ENCODE measurements at regions of chr20 and their contacts with region 1.

Region 1: DNA sequence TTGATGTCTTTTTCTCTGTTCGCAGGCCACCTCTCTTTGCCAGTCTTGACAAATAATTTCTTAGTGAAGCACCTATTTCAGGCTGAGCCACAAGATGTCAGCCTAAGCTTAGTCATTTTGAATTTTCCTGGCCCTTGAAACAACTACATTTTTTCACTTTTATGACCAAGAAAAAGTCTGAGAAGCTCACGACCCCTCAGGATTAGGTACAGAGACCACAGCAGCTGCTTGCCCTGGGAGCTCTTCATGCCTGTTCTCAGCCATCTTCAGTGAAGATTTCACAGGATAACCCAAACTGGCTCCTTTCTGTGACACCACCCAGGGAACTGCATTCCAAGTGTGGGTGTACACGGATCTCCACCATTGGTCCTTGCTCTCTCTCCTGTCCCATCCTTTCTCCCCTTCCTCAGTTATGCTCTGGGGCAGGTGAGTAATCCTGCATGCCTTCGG is 38.4 kb upstream of the SPTLC3 start:
- DNase-seq: peak in 2 of 9 experiments; percentile 14 to 29
- ATAC-seq: no peak
- H3K4me3 ChIP-seq: no peak overlapping the region
- H3K4me3 Mint-ChIP-seq: no peak overlapping the region
- H3K27ac ChIP-seq: no peak overlapping the region
- H3K27ac Mint-ChIP-seq: no peak overlapping the region
- H3K4me1 ChIP-seq: no peaks in the 10 kb centered on the region
- H3K4me1 Mint-ChIP-seq: peaks cover 4% of the 10 kb centered on the region
- H3K27me3 ChIP-seq: no peaks in the 10 kb centered on the region
- H3K27me3 Mint-ChIP-seq: no peaks in the 10 kb centered on the region
- CTCF ChIP-seq: no peak

Region 2: GRCh38 chr20:13006835-13007234 is 36.4 kb after region 1 on chr20:
- CTCF ChIA-PET with region 1: no interaction called
- POLR2A ChIA-PET with region 1: no interaction called
- intact Hi-C with region 1: loop called in 1 of 2 experiments (anchors 1 kb)
- DNase-seq: no peak
- ATAC-seq: no peak
- H3K4me3 ChIP-seq: no peak overlapping the region
- H3K4me3 Mint-ChIP-seq: no peak overlapping the region
- H3K27ac ChIP-seq: no peak overlapping the region
- H3K27ac Mint-ChIP-seq: no peak overlapping the region
- H3K4me1 ChIP-seq: peaks cover 5% of the 10 kb centered on the region
- H3K4me1 Mint-ChIP-seq: peaks cover 25% of the 10 kb centered on the region
- H3K27me3 ChIP-seq: no peaks in the 10 kb centered on the region
- H3K27me3 Mint-ChIP-seq: no peaks in the 10 kb centered on the region
- CTCF ChIP-seq: no peak

Region 3: GRCh38 chr20:13105864-13106457 is 135.6 kb after region 1 on chr20:
- CTCF ChIA-PET with region 1: no interaction called
- POLR2A ChIA-PET with region 1: no interaction called
- intact Hi-C with region 1: loop called (anchors 1 kb)
- DNase-seq: peak in 2 of 9 experiments; percentile 10 to 29
- ATAC-seq: no peak
- H3K4me3 ChIP-seq: no peak overlapping the region
- H3K4me3 Mint-ChIP-seq: no peak overlapping the region
- H3K27ac ChIP-seq: no peak overlapping the region
- H3K27ac Mint-ChIP-seq: no peak overlapping the region
- H3K4me1 ChIP-seq: no peaks in the 10 kb centered on the region
- H3K4me1 Mint-ChIP-seq: no peaks in the 10 kb centered on the region
- H3K27me3 ChIP-seq: no peaks in the 10 kb centered on the region
- H3K27me3 Mint-ChIP-seq: peaks cover 4% of the 10 kb centered on the region
- CTCF ChIP-seq: peak; percentile 65

Region 4: DNA sequence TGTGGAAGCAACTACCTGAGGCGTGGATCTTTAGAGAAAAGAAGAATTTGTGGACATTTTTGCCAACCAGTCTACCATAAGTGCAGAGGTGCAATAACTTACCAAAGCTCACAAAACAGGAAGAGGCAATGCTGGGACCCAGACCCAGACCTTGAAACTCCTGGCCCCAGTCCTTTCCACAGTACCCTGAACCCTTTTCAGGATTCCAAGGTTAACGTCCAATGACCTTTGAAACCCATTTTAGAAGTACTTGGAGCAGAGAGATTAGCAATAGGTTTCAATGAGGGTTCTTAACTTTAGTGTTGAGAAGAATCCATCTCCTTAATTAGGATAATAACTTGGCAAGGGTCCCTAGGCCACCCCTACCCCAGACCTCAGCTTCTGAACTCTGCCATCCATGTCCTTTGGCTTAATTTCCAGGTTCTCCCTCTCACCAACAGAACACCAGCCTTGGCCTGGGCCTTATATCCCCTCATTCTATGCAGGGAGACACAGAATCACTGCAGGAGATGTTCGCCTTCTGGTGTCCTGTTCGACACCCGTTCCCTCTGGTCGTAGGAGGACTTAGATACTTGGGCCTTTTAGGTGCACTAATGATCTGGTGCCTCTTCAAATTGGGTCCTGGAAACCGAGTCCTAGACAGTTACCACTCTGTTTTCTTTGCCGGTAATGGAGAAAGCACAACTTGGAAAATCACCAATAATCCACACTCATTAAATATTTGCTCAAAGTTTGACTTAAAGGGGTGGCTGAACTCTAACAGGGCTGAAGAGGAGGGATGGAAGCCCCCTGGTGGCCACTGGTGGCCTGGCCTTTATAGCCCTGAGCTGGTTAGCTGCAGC is 291.3 kb after region 1 on chr20:
- CTCF ChIA-PET with region 1: no interaction called
- POLR2A ChIA-PET with region 1: no interaction called
- intact Hi-C with region 1: loop called in 1 of 2 experiments (anchors 2 kb)
- DNase-seq: peak; percentile 34 to 75 (median 69)
- ATAC-seq: peak; percentile 84
- H3K4me3 ChIP-seq: no peak overlapping the region
- H3K4me3 Mint-ChIP-seq: no peak overlapping the region
- H3K27ac ChIP-seq: no peak overlapping the region
- H3K27ac Mint-ChIP-seq: no peak overlapping the region
- H3K4me1 ChIP-seq: no peaks in the 10 kb centered on the region
- H3K4me1 Mint-ChIP-seq: peaks cover 4% of the 10 kb centered on the region
- H3K27me3 ChIP-seq: no peaks in the 10 kb centered on the region
- H3K27me3 Mint-ChIP-seq: no peaks in the 10 kb centered on the region
- CTCF ChIP-seq: peak; percentile 80

Region 5: DNA sequence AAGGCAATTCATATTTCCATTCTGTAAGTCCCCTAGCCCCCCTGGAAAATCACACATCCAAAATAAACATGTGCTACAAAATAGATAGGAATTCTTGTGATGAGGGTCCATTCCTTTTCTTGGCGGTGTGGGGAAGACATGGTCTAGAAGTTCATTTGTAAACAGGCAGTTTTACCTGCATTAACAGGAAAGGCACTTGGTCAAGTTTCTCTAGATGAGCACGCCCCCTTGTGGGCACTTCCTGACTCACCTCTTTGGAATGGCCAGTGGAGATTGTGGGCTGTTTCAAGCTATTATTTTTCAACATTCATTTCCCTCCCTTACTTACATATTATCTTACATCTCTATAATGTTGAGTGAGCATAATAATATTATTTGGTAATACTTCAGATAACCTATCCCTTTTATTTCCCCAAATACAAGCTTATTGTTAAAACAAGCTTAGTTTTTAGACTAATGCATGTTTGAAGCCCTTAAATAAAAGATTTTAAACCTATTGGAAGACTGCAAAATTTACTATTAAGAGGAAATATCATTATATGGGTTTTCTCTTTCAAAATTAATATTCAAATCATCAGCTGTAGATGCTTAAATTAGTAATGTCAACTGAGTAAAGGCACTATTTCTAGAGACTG is 576.2 kb after region 1 on chr20:
- CTCF ChIA-PET with region 1: no interaction called
- POLR2A ChIA-PET with region 1: no interaction called
- intact Hi-C with region 1: loop called in 1 of 2 experiments (anchors 5 kb)
- DNase-seq: peak; percentile 28 to 75 (median 58)
- ATAC-seq: no peak
- H3K4me3 ChIP-seq: no peak overlapping the region
- H3K4me3 Mint-ChIP-seq: no peak overlapping the region
- H3K27ac ChIP-seq: no peak overlapping the region
- H3K27ac Mint-ChIP-seq: no peak overlapping the region
- H3K4me1 ChIP-seq: no peaks in the 10 kb centered on the region
- H3K4me1 Mint-ChIP-seq: no peaks in the 10 kb centered on the region
- H3K27me3 ChIP-seq: no peaks in the 10 kb centered on the region
- H3K27me3 Mint-ChIP-seq: no peaks in the 10 kb centered on the region
- CTCF ChIP-seq: peak; percentile 72

Region 6: DNA sequence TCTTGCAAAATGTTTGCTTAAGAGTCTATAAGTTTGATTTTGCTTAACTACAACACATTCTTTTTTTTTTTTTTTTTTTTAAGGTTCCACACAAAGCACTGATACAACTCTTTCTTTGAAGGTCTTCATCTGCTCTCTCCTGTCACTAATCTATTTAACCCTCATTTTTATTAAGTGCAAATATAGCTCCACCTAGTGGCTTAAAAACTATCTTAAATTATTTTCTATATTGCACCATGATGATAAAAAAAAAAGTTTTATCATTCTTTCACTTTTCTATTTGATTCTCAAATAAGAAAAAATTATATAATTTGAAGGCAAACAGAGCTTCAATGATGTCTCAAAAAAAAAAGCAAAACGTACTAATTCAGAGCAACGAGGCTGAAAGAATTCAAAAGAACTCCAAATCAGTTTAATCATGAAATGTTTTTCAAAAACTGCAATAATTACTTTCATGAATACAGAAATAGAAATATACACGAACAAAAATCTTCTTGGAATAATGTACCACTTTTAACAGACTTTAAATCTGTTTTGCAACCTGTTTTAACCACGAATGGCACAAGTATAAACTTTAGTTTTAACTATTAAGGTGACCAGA is 801.6 kb after region 1 on chr20:
- CTCF ChIA-PET with region 1: no interaction called
- POLR2A ChIA-PET with region 1: no interaction called
- intact Hi-C with region 1: loop called in 1 of 2 experiments (anchors 10 kb)
- DNase-seq: peak in 1 of 9 experiments; percentile 32
- ATAC-seq: no peak
- H3K4me3 ChIP-seq: no peak overlapping the region
- H3K4me3 Mint-ChIP-seq: no peak overlapping the region
- H3K27ac ChIP-seq: no peak overlapping the region
- H3K27ac Mint-ChIP-seq: no peak overlapping the region
- H3K4me1 ChIP-seq: no peaks in the 10 kb centered on the region
- H3K4me1 Mint-ChIP-seq: peaks cover 8% of the 10 kb centered on the region
- H3K27me3 ChIP-seq: no peaks in the 10 kb centered on the region
- H3K27me3 Mint-ChIP-seq: no peaks in the 10 kb centered on the region
- CTCF ChIP-seq: peak; percentile 70